ENCODE measurements at regions of chr17 and their contacts with region 1.

Region 1: DNA sequence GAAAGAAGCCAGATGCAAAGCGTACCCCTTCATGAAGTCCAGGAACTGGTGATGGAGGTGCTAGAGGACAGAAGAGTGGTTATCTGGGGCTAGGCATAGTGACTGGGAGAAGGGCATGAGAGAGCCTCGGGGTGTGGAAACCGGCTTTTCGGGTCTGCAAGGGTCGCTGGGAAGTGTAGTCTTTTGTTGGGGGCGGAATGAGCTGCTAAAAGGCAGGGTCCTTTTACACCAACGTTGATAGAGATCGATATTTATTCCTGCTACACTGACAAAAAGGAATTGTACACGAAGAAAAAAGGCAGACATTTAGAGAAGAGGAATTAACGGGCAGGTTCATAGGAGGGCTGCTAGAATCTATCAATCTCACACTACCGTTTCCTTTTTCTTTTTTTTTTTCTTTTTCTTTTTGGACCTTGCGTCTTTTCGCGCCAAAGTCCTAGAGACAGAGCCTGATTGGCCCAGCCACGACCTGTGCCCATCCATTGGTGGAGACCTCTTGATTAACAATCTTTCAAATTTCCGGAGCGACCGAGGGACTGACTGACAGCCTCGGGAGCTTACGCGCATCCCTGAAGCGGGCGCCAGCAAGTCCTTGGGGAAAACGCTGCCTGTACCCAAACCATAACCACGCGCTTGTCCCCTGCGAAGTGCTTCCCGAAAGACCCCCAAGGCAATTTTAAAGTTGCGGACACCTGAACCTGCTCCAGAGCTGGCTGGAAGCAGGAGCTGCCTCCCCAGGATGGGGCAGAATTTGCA is 27.7 kb upstream of the DHRS7B start:
- DNase-seq: peak; percentile 97
- H3K4me3 ChIP-seq: peak overlapping the region; percentile 66
- H3K27ac ChIP-seq: peak overlapping the region; percentile 91
- H3K4me1 ChIP-seq: peaks cover 4% of the 10 kb centered on the region
- H3K27me3 ChIP-seq: no peaks in the 10 kb centered on the region
- CTCF ChIP-seq: no peak

Region 2: GRCh38 chr17:21019976-21020586 is 79.0 kb before region 1 on chr17:
- CTCF ChIA-PET with region 1: interaction called, 12 read pairs
- POLR2A ChIA-PET with region 1: no interaction called
- intact Hi-C with region 1: no loop called
- DNase-seq: peak; percentile 66
- H3K4me3 ChIP-seq: no peak overlapping the region
- H3K27ac ChIP-seq: no peak overlapping the region
- H3K4me1 ChIP-seq: no peaks in the 10 kb centered on the region
- H3K27me3 ChIP-seq: no peaks in the 10 kb centered on the region
- CTCF ChIP-seq: peak; percentile 66

Region 3: DNA sequence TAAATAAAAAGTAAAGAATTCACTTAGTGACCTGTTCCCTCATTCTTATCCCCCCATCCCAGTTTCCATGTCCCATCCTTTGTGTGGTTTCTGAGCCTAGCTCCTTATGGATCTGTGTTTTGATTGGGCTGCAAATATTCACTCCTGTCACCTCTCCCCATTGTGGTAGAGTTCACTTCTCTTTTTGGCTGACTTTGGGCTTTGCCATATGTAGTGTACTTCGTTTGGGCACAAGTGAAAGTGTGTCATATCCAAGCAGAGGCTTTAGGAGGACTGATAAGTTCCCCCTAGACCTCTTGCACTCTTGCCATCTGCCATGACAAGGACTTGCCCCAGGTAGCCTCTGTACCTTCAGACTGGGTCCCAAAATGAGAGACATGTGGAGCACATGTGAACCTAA is 14.6 kb after region 1 on chr17:
- CTCF ChIA-PET with region 1: no interaction called
- POLR2A ChIA-PET with region 1: no interaction called
- intact Hi-C with region 1: no loop called
- DNase-seq: no peak
- H3K4me3 ChIP-seq: no peak overlapping the region
- H3K27ac ChIP-seq: no peak overlapping the region
- H3K4me1 ChIP-seq: no peaks in the 10 kb centered on the region
- H3K27me3 ChIP-seq: no peaks in the 10 kb centered on the region
- CTCF ChIP-seq: no peak

Region 4: DNA sequence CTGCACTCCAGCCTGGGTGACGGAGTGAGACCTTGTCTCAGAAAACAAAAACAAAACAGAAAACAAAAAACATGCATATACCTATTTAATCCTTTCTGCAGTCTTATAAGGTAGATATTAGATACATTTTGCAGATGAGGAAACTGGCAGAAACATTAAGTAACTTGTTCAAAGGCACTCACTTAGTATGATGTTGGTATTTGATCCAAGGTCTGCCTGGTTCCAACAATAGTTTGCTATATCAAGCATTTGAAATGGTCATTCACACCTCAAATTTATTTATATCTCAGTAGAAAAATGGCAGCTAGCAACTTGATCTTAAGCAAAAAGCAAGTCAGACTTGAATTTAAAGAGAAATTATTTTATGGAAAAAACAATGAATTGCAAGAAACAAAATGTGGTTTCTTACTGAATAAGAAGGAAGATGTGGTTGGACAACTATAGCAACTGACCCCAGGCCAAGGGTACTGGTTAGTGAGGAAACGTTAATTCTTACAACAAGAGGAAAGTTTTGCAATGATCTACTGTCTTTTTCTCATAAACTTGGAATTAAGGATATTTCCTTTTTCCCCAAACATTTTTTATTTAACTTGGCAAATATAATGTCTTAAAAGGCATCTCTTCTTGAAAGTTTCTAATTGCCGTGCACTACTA is 47.4 kb after region 1 on chr17:
- CTCF ChIA-PET with region 1: no interaction called
- POLR2A ChIA-PET with region 1: no interaction called
- intact Hi-C with region 1: no loop called
- DNase-seq: no peak
- H3K4me3 ChIP-seq: no peak overlapping the region
- H3K27ac ChIP-seq: no peak overlapping the region
- H3K4me1 ChIP-seq: no peaks in the 10 kb centered on the region
- H3K27me3 ChIP-seq: no peaks in the 10 kb centered on the region
- CTCF ChIP-seq: no peak

Region 5: GRCh38 chr17:21345236-21345635 is 246.1 kb after region 1 on chr17:
- CTCF ChIA-PET with region 1: no interaction called
- POLR2A ChIA-PET with region 1: no interaction called
- intact Hi-C with region 1: no loop called
- DNase-seq: no peak
- H3K4me3 ChIP-seq: no peak overlapping the region
- H3K27ac ChIP-seq: no peak overlapping the region
- H3K4me1 ChIP-seq: no peaks in the 10 kb centered on the region
- H3K27me3 ChIP-seq: no peaks in the 10 kb centered on the region
- CTCF ChIP-seq: no peak

Measured in A673 (cell line).